ENCODE measurements at regions of chr20 and their contacts with region 1.

Region 1: DNA sequence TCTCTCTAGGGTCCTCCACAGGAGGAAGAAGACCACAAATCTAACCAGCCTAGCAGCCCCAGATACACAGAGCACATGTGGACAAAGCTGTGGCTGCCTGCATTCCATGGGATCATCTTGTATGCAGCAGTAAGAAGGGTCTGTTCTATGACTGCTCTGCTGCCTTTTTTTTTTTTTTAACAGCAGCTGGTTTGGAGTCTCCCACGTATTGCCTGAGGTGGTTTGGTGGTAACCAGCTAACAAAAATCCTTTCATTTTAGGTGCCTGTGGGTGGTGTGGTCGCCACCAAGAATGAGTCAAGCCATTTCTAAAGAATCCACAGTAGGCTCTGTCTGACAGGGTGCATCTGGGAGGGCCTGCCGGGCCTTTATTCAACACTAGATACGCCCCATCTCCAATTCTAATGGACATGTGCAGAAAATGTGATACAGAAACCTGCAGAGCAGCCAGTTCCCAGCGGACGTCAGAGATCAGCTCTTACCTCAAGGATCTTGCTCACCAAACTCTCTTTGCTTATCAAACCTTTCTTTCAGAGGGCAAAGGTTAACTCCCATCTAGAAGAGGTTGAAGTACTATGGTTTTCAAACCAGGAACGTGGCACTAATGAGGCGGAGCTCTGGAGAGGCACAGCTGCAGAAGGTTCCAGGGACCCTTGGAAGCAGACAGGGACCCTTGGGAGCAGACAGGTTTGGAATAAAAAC is 32.0 kb downstream of the GNAS-AS1 start:
- DNase-seq: peak; percentile 85
- H3K4me3 Mint-ChIP-seq: peak overlapping the region; percentile 25
- H3K27ac Mint-ChIP-seq: peak overlapping the region; percentile 62
- H3K4me1 Mint-ChIP-seq: peaks cover 15% of the 10 kb centered on the region
- H3K27me3 Mint-ChIP-seq: peaks cover 50% of the 10 kb centered on the region

Region 2: GRCh38 chr20:58850693-58851174 is 32.0 kb after region 1 on chr20 and contains the start of gene GNAS-AS1:
- intact Hi-C with region 1: loop called (anchors 2 kb)
- DNase-seq: peak; percentile 94
- H3K4me3 Mint-ChIP-seq: peak within 1 kb of the TSS; percentile 90
- H3K27ac Mint-ChIP-seq: no peak within 1 kb of the TSS
- H3K4me1 Mint-ChIP-seq: peaks cover 36% of the 10 kb centered on the region
- H3K27me3 Mint-ChIP-seq: peaks cover 57% of the 10 kb centered on the region
- total RNA-seq, gene GNAS-AS1: 0.64 and 1.6 TPM in 2 replicates

Measured in activated CD4-positive, alpha-beta T cell treated with anti-CD3 and anti-CD28 coated beads, Interleukin-2, amount 10 ng/mL, durations not matched to agents 24 days and 14 days (primary cell).